ENCODE measurements at regions of chr1 and their contacts with region 1.

Region 1: DNA sequence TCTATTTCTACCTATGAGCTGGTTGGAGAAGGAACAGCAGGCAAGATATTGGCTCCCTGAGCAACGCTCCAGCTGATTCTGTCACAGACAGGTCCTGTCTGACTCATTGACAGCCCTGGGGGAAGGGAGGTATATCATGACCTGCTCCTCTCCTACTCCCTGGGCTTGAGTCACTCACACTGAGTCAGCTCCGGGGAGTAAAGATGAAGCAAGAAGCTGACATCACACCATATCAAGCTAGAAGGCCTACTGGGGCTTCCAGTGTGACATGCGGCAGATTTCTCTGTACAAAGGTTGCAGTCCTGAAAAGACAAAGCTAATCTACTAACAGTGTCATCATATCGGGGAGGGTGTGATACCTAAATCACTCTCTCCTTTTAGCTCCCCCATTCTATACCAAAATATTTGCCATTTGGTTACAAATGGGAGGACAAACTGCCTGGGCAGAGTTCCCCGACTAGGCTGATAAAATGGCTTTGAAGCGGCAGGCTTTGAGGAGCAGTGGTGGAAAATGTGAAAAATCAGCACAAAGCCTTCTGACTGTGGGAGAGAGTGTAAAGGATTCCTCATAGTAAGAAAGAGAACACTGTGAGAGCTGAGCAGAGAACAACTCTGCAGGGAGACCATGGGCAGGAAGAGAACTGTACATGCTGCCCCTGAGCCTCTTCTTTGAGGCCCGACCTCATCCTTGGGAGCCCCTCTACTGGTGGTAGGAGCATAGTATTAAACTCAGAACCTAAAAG is 15.5 kb downstream of the PI4KB start:
- DNase-seq: peak; percentile 85 to 97 (median 91)
- ATAC-seq: peak; percentile 98
- H3K4me3 ChIP-seq: no peak overlapping the region
- H3K27ac ChIP-seq: peak overlapping the region; percentile 97
- H3K4me1 ChIP-seq: peaks cover 12 to 45% of the 10 kb centered on the region in 2 experiments; a peak in 4 of 5 replicates
- H3K27me3 ChIP-seq: no peaks in the 10 kb centered on the region
- CTCF ChIP-seq: no peak
- EP300 ChIP-seq: peak; percentile 93
- POLR2A ChIP-seq: no peak; the same call in 1 of the 2 replicates
- RAD21 ChIP-seq: peak in 1 of 2 experiments; percentile 25; a peak in 1 of 4 replicates

Region 2: GRCh38 chr1:151292207-151293030 is 19.3 kb before region 1 on chr1:
- CTCF ChIA-PET with region 1: no interaction called
- POLR2A ChIA-PET with region 1: interaction called, 11 read pairs
- in situ Hi-C with region 1: no loop called
- intact Hi-C with region 1: no loop called
- DNase-seq: peak in 1 of 4 experiments; percentile 27
- ATAC-seq: peak; percentile 62
- H3K4me3 ChIP-seq: no peak overlapping the region
- H3K27ac ChIP-seq: no peak overlapping the region; the same call in 2 of the 3 replicates
- H3K4me1 ChIP-seq: peaks cover 0 to 28% of the 10 kb centered on the region in 2 experiments; a peak in 2 of 5 replicates
- H3K27me3 ChIP-seq: no peaks in the 10 kb centered on the region
- CTCF ChIP-seq: peak in 2 of 3 experiments; percentile 14 to 21; a peak in 1 of 6 replicates
- EP300 ChIP-seq: no peak
- POLR2A ChIP-seq: peak; percentile 67
- RAD21 ChIP-seq: no peak

Region 3: GRCh38 chr1:151327223-151327902 is 15.6 kb after region 1 on chr1 and contains the start of gene PI4KB:
- CTCF ChIA-PET with region 1: no interaction called
- POLR2A ChIA-PET with region 1: interaction called, 156 read pairs
- in situ Hi-C with region 1: no loop called
- intact Hi-C with region 1: loop called (anchors 1 kb)
- DNase-seq: peak; percentile 93 to 98 (median 96)
- ATAC-seq: peak; percentile 92
- H3K4me3 ChIP-seq: peak within 1 kb of the TSS; percentile 55
- H3K27ac ChIP-seq: peak within 1 kb of the TSS; percentile 86
- H3K4me1 ChIP-seq: peaks cover 3 to 29% of the 10 kb centered on the region in 2 experiments; a peak in 3 of 5 replicates
- H3K27me3 ChIP-seq: no peaks in the 10 kb centered on the region
- CTCF ChIP-seq: no peak
- EP300 ChIP-seq: no peak
- POLR2A ChIP-seq: peak; percentile 82
- RAD21 ChIP-seq: no peak
- polyA plus RNA-seq, gene PI4KB: 3.1 to 8.9 TPM

Region 4: DNA sequence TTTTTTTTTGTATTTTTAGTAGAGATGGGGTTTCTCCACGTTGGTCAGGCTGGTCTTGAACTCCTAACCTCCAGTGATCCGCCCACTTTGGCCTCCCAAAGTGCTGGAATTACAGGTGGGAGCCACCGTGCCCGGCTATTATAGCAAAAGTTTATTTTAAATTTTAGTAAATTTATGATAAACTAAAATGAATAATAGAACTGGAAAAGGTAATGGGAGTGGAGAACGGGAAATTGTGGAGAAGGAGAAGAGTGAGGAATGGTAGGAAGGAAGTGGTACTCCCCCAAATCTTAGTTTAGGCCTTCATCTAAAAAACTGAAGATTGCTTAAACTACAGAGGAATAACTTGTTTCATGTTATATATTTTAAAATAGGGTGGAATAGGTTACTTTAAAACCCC is 23.1 kb after region 1 on chr1:
- CTCF ChIA-PET with region 1: no interaction called
- POLR2A ChIA-PET with region 1: interaction called, 10 read pairs
- in situ Hi-C with region 1: no loop called
- intact Hi-C with region 1: no loop called
- DNase-seq: no peak
- ATAC-seq: no peak
- H3K4me3 ChIP-seq: no peak overlapping the region
- H3K27ac ChIP-seq: no peak overlapping the region
- H3K4me1 ChIP-seq: no peaks in the 10 kb centered on the region
- H3K27me3 ChIP-seq: no peaks in the 10 kb centered on the region
- CTCF ChIP-seq: no peak
- EP300 ChIP-seq: no peak
- POLR2A ChIP-seq: no peak
- RAD21 ChIP-seq: no peak